GM13976 (cell line): ENCODE measurements at regions of chr17 and their contacts with region 1.

Region 1: GRCh38 chr17:74864866-74865395 is 5.2 kb upstream of the GRIN2C start:
- DNase-seq: peak; percentile 88
- CTCF ChIP-seq: peak; percentile 96

Region 2: DNA sequence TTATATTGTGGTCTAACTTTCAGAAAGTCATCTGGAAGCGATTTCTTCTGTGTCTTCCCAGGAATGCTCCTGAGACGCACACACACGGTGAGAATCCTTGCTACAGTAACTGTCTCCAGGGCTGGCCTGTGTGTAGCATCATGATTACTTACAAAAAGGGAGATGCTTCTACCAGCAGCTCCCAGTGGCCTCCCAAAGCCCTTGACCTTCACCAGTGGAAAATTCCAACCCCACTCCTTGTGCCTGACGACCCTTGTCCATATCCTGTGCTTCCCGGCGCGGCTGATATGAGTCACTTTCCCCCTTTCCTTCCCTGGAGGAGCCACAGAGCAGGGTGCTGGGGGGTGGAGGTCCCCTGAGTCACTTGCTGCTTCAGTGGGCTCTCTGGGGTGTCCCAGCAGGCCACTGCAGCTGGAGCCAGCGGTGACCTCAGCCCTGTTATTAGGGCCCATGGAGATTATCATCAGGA is 66.7 kb before region 1 on chr17:
- in situ Hi-C with region 1: loop called (anchors 10 kb)
- DNase-seq: no peak
- CTCF ChIP-seq: no peak